Natural killer cell (primary cell): ENCODE measurements at regions of chr18 and their contacts with region 1.

Region 1: GRCh38 chr18:48834413-48835031 is 116.2 kb downstream of the SMAD7 start:
- DNase-seq: peak; percentile 81 to 88
- ATAC-seq: peak; percentile 68 to 88 (median 77)
- H3K4me3 ChIP-seq: peak overlapping the region; percentile 58
- H3K4me3 Mint-ChIP-seq: peak overlapping the region; percentile 95
- H3K27ac ChIP-seq: peak overlapping the region; percentile 97
- H3K27ac Mint-ChIP-seq: peak overlapping the region; percentile 94 to 100
- H3K4me1 ChIP-seq: peaks cover 100% of the 10 kb centered on the region
- H3K4me1 Mint-ChIP-seq: peaks cover 79 to 100% of the 10 kb centered on the region in 2 donors
- H3K27me3 ChIP-seq: no peaks in the 10 kb centered on the region
- H3K27me3 Mint-ChIP-seq: no peaks in the 10 kb centered on the region
- CTCF ChIP-seq: no peak

Region 2: GRCh38 chr18:48777026-48777743 is 57.3 kb before region 1 on chr18:
- intact Hi-C with region 1: loop called (anchors 1 kb)
- DNase-seq: peak; percentile 76 to 85
- ATAC-seq: peak; percentile 82 to 96 (median 94)
- H3K4me3 ChIP-seq: no peak overlapping the region
- H3K4me3 Mint-ChIP-seq: no peak overlapping the region
- H3K27ac ChIP-seq: no peak overlapping the region
- H3K27ac Mint-ChIP-seq: peak overlapping the region in 1 of 2 donors; percentile 48
- H3K4me1 ChIP-seq: peaks cover 30% of the 10 kb centered on the region
- H3K4me1 Mint-ChIP-seq: peaks cover 0 to 22% of the 10 kb centered on the region in 2 donors
- H3K27me3 ChIP-seq: no peaks in the 10 kb centered on the region
- H3K27me3 Mint-ChIP-seq: peaks cover 0 to 7% of the 10 kb centered on the region in 2 donors
- CTCF ChIP-seq: peak; percentile 94

Region 3: GRCh38 chr18:48797841-48798255 is 36.7 kb before region 1 on chr18:
- intact Hi-C with region 1: loop called (anchors 5 kb)
- DNase-seq: peak; percentile 31 to 33
- ATAC-seq: peak; percentile 51 to 85 (median 72)
- H3K4me3 ChIP-seq: no peak overlapping the region
- H3K4me3 Mint-ChIP-seq: no peak overlapping the region
- H3K27ac ChIP-seq: no peak overlapping the region
- H3K27ac Mint-ChIP-seq: peak overlapping the region in 1 of 2 donors; percentile 57
- H3K4me1 ChIP-seq: peaks cover 32% of the 10 kb centered on the region
- H3K4me1 Mint-ChIP-seq: peaks cover 18 to 52% of the 10 kb centered on the region in 2 donors
- H3K27me3 ChIP-seq: no peaks in the 10 kb centered on the region
- H3K27me3 Mint-ChIP-seq: no peaks in the 10 kb centered on the region
- CTCF ChIP-seq: no peak

Region 4: DNA sequence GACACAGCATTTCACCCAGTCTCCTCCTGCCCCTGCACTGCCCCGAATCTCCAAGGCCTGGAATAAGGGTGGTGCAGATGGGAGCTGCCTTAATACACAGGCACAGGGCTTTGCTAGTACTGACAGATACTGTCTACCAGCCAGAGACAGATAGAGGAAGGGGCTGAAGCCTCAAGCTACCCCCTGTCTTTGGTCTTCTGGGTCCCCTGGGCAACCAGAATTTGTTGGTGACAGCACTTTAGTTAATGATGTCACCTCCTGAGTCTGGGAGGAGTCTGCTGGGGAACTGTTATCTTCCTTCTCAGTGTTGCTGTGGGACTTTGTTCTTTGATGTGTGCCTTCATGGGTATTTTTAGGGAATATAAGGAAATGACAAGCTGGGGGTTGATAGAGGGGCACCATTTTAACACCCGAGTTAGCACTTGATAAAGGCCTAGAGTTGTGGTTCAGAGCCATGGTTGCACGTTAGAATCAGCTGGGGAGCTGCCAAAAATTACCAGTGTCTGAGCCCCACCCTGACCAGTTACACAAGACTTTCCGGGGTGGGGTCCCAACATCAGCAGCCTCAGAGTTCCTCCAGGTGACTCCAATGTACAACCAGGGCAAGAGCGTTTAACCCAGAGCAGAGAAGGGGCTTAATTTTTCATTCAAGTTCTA is 20.6 kb before region 1 on chr18:
- intact Hi-C with region 1: loop called (anchors 1 kb)
- DNase-seq: peak; percentile 71 to 89
- ATAC-seq: peak; percentile 52 to 81 (median 74)
- H3K4me3 ChIP-seq: no peak overlapping the region
- H3K4me3 Mint-ChIP-seq: peak overlapping the region; percentile 61
- H3K27ac ChIP-seq: peak overlapping the region; percentile 99
- H3K27ac Mint-ChIP-seq: peak overlapping the region; percentile 97 to 99
- H3K4me1 ChIP-seq: peaks cover 55% of the 10 kb centered on the region
- H3K4me1 Mint-ChIP-seq: peaks cover 60 to 75% of the 10 kb centered on the region in 2 donors
- H3K27me3 ChIP-seq: no peaks in the 10 kb centered on the region
- H3K27me3 Mint-ChIP-seq: no peaks in the 10 kb centered on the region
- CTCF ChIP-seq: no peak

Region 5: DNA sequence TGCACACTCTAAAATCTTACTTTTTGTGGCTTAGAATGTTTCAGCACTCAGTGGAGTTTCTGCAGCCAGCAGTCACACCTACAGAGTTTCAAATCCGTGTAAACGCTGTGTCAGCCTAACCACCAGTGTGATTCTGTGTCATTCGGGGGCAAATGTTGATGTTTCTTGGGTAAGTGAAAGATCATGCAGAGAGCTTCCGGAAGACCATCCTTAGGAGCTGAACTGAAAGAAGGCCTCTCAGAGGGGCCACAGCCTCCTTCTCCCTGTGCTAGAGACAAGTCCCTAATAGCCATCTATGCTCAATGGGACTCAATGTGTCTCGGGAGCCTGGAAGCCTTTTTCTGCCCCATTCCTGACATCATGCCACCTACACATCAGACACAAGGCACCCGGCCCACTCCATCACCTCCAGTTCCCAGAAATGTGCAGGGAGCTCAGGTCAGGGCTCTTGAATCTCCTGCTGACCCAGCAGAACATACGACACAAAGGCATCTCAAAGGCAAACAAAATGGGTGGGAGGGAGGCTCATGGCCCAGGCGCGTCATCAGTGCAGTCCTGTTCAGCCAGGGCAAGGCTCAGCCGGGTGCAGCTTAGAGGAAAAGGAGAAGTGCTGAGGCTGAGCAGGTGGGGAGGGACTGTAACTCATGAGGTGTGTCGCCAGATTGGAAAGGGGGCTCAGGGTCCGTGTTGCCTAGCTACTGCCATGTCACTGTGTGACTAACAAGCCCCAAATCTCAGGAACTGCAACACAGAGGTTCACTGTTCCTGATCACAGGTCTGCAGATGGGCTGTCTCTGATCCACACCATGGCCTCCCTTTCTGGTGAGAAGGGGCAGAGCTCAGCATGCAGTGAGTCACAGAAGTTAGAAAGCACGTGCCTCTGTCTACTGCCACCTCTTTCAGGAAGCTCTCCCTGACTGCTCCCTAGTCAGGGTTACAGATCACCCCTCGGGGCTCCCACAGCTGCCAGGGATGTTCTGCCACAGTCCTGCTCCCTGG is 34.2 kb after region 1 on chr18:
- intact Hi-C with region 1: loop called (anchors 1 kb)
- DNase-seq: peak; percentile 57 to 73
- ATAC-seq: peak; percentile 74 to 91 (median 85)
- H3K4me3 ChIP-seq: no peak overlapping the region
- H3K4me3 Mint-ChIP-seq: peak overlapping the region; percentile 76
- H3K27ac ChIP-seq: peak overlapping the region; percentile 83
- H3K27ac Mint-ChIP-seq: peak overlapping the region; percentile 88 to 92
- H3K4me1 ChIP-seq: peaks cover 56% of the 10 kb centered on the region
- H3K4me1 Mint-ChIP-seq: peaks cover 28 to 47% of the 10 kb centered on the region in 2 donors
- H3K27me3 ChIP-seq: no peaks in the 10 kb centered on the region
- H3K27me3 Mint-ChIP-seq: no peaks in the 10 kb centered on the region
- CTCF ChIP-seq: no peak

Region 6: GRCh38 chr18:48934723-48935432 is 100.4 kb after region 1 on chr18:
- intact Hi-C with region 1: loop called (anchors 5 kb)
- DNase-seq: peak in 1 of 2 donors; percentile 56
- ATAC-seq: peak; percentile 16 to 47 (median 32)
- H3K4me3 ChIP-seq: no peak overlapping the region
- H3K4me3 Mint-ChIP-seq: peak overlapping the region; percentile 88
- H3K27ac ChIP-seq: peak overlapping the region; percentile 83
- H3K27ac Mint-ChIP-seq: peak overlapping the region; percentile 95 to 96
- H3K4me1 ChIP-seq: peaks cover 94% of the 10 kb centered on the region
- H3K4me1 Mint-ChIP-seq: peaks cover 92 to 95% of the 10 kb centered on the region in 2 donors
- H3K27me3 ChIP-seq: no peaks in the 10 kb centered on the region
- H3K27me3 Mint-ChIP-seq: no peaks in the 10 kb centered on the region
- CTCF ChIP-seq: no peak

Region 7: DNA sequence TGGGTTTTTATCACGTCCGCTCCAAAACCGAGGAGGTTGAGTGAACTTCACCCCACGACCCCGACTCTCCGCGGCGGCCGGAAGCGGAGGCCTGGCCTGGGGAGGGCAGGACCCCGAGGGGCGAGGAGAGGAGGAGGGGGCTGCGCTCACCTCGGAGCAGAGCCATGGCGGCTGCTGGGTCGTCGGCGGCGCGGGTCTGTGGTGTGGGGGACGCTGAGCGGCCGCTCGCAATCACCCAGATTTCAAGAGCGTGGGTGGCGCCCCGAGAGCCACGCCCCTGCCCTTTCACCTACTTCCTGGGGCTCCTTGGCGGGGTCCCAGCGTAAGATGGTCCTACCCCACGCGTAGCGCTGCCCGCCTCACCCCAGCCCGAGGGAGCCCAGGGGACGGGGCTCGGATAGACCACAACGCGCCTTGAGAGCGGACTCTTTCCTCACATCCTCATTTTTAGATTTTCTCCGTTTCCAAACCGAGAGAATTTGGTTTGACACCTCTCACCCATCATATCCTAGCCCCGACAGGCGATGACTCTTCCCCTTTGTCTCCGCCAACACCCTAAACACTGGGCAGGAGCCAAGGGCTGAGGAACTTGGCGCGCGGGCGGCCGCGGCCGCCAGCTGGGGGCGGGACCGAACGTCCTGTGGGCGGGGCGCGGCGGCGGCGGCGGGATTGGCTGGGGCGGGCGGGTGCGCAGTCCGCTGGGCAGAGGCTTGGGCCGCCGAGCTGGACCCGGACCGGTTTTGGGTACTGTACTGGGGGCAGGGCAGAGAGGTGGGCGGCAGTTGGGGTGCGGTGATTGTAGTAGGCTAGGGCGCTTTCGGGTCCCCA is 979.0 kb after region 1 on chr18 and contains the start of gene ACAA2:
- intact Hi-C with region 1: loop called (anchors 10 kb)
- DNase-seq: peak; percentile 83 to 88
- ATAC-seq: peak; percentile 77 to 90 (median 83)
- H3K4me3 ChIP-seq: peak within 1 kb of the TSS; percentile 93
- H3K4me3 Mint-ChIP-seq: peak within 1 kb of the TSS; percentile 99
- H3K27ac ChIP-seq: peak within 1 kb of the TSS; percentile 99
- H3K27ac Mint-ChIP-seq: peak within 1 kb of the TSS; percentile 77 to 99
- H3K4me1 ChIP-seq: peaks cover 35% of the 10 kb centered on the region
- H3K4me1 Mint-ChIP-seq: peaks cover 82 to 83% of the 10 kb centered on the region in 2 donors
- H3K27me3 ChIP-seq: no peaks in the 10 kb centered on the region
- H3K27me3 Mint-ChIP-seq: no peaks in the 10 kb centered on the region
- CTCF ChIP-seq: no peak
- total RNA-seq, gene ACAA2: 47.0 to 71.7 (median 59.2) TPM